ENCODE measurements at regions of chr6 and their contacts with region 1.

Region 1: GRCh38 chr6:32413427-32414047 is 6.6 kb upstream of the BTNL2 start:
- DNase-seq: peak; percentile 91
- ATAC-seq: peak; percentile 86
- H3K4me3 ChIP-seq: no peak overlapping the region
- H3K4me3 Mint-ChIP-seq: peak overlapping the region; percentile 27
- H3K27ac ChIP-seq: no peak overlapping the region
- H3K27ac Mint-ChIP-seq: peak overlapping the region; percentile 8
- H3K4me1 ChIP-seq: peaks cover 7 to 11% of the 10 kb centered on the region in 2 donors
- H3K4me1 Mint-ChIP-seq: peaks cover 13% of the 10 kb centered on the region
- H3K27me3 ChIP-seq: peaks cover 0 to 19% (median 10%) of the 10 kb centered on the region in 4 experiments
- H3K27me3 Mint-ChIP-seq: peaks cover 20% of the 10 kb centered on the region
- CTCF ChIP-seq: peak; percentile 94

Region 2: DNA sequence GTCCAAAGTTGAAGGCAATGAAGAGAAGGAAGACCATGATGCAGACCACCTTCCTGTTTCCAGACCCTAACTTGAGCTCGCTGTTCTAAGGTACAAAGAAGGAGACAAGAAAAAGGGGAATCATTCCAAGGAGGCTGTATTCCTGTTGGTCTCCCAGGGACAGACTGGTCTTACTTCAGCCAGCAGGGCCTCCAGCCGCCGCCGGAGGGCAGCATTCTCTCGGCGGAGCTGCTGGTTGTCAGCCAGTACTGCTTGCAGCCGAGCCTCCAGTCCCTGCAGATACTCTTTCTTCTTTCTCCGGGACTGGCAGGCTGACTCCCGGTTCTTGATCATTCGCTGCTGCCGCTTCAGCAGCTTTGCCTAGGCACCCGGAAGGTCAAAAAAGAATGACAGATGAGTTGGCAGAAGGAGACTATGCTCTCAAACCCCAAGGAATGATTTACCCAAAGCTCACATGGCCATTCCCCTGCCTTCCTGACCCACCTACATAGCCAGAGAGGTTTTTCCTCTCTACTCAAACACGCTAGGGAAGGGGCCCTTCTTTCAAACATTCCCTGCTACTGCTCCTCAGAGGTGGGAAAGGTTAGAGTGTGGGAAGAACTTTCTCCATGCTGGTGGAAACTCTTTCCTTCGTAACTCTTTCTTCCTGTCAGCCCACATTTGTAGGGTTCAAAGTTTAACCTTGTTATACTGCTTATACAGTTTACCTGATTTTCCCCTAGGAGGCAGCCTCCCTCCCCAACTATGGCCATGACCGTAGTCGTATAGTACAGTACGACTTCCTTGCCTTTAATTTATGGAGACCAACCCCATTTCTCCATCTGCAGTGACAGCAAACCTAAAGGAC is 294.5 kb before region 1 on chr6:
- CTCF ChIA-PET with region 1: interaction called, 3 read pairs
- POLR2A ChIA-PET with region 1: no interaction called
- intact Hi-C with region 1: loop called (anchors 2 kb)
- DNase-seq: peak; percentile 77
- ATAC-seq: peak; percentile 85
- H3K4me3 ChIP-seq: no peak overlapping the region
- H3K4me3 Mint-ChIP-seq: no peak overlapping the region
- H3K27ac ChIP-seq: no peak overlapping the region
- H3K27ac Mint-ChIP-seq: no peak overlapping the region
- H3K4me1 ChIP-seq: peaks cover 0 to 3% of the 10 kb centered on the region in 2 donors
- H3K4me1 Mint-ChIP-seq: peaks cover 7% of the 10 kb centered on the region
- H3K27me3 ChIP-seq: no peaks in the 10 kb centered on the region
- H3K27me3 Mint-ChIP-seq: no peaks in the 10 kb centered on the region
- CTCF ChIP-seq: peak; percentile 95

Region 3: DNA sequence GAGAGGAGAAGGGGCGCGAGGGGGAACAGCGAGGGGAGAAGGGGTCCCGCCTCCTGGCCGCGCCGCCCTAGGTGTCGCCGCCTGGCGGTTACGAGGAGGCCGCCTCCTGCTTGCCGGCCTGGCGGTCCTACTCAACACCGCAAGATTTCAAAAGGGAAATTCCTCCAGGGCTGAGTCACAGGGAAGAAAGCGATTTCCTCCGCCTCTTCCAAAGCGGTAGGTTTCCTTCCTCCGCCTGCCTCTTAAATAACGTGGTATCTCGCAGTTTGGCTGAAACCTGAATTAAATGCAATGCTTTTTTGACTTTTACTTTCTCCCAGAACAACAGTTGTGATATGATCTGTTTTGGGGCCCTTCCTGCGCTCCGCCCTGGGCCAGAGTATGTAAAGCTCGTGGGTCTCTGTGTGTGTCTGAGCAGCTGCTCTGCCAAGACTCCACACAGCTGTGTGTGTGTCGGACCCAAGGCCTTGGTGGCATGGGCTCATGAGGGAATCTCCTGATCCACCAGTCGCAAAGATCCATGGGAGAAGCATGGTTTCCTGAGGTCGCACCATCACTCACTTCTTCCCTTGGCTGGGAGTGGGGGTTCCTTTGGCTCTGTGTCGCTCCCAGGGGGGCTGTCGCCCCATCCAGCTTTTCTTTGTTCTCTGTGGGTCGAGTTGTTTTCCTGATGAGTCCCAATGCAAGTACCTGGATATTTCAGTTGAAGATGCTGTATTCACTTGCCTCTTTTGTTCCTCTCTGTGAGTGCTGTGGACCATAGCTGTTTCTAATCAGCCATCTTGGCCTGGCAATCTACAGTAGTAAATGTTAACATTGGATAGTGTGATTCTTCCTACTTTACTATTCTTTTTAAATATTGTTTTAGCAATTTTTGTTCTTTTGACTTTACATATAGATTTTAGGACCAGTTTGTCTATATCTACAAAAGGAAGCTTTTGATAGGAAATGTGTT is 158.1 kb before region 1 on chr6:
- CTCF ChIA-PET with region 1: interaction called, 172 read pairs
- POLR2A ChIA-PET with region 1: no interaction called
- intact Hi-C with region 1: no loop called
- DNase-seq: peak; percentile 79
- ATAC-seq: peak; percentile 75
- H3K4me3 ChIP-seq: peak overlapping the region in 4 of 5 experiments; percentile 32 to 81 (median 60)
- H3K4me3 Mint-ChIP-seq: peak overlapping the region; percentile 83
- H3K27ac ChIP-seq: peak overlapping the region; percentile 58 to 89
- H3K27ac Mint-ChIP-seq: peak overlapping the region; percentile 90
- H3K4me1 ChIP-seq: peaks cover 25 to 34% of the 10 kb centered on the region in 2 donors
- H3K4me1 Mint-ChIP-seq: peaks cover 72% of the 10 kb centered on the region
- H3K27me3 ChIP-seq: no peaks in the 10 kb centered on the region
- H3K27me3 Mint-ChIP-seq: no peaks in the 10 kb centered on the region
- CTCF ChIP-seq: peak; percentile 73

Region 4: DNA sequence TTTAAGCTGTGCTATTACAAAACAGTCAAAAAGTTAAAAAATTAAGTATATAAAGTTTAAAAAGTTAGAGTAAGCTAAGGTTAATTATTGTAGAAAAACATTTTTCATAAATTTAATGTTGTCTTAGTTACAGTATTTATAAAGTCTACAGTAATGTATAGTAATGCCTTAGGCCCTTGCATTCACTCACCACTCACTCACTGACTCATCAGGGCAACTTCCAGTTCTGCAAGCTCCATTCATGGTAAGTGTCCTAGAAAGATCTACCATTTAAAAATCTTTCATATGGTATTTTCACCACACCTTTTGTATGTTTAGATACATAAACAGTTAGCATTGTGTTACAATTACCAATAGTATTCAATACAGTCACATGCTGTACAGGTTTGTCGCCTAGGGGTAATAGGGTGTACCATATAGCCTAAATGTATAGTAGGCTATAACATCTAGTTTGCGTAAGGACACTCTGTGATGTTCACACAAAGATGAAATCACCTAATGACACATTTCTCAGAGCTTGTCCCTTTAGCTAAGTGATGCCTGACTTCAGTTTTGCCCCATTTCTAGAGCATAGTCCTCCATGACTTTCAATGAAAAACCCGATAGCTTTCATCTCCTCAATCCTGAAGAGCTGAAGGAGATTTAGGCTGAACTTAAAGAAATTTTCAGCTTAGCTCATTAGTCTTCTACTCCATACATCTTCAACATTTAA is 11.2 kb after region 1 on chr6:
- CTCF ChIA-PET with region 1: interaction called, 46 read pairs
- POLR2A ChIA-PET with region 1: no interaction called
- intact Hi-C with region 1: no loop called
- DNase-seq: no peak
- ATAC-seq: no peak
- H3K4me3 ChIP-seq: no peak overlapping the region
- H3K4me3 Mint-ChIP-seq: no peak overlapping the region
- H3K27ac ChIP-seq: no peak overlapping the region
- H3K27ac Mint-ChIP-seq: no peak overlapping the region
- H3K4me1 ChIP-seq: no peaks in the 10 kb centered on the region
- H3K4me1 Mint-ChIP-seq: no peaks in the 10 kb centered on the region
- H3K27me3 ChIP-seq: peaks cover 0 to 2% (median under 1%) of the 10 kb centered on the region in 4 experiments
- H3K27me3 Mint-ChIP-seq: peaks cover 13% of the 10 kb centered on the region
- CTCF ChIP-seq: no peak

Region 5: GRCh38 chr6:32692019-32692418 is 278.5 kb after region 1 on chr6:
- CTCF ChIA-PET with region 1: interaction called, 11 read pairs
- POLR2A ChIA-PET with region 1: no interaction called
- intact Hi-C with region 1: no loop called
- DNase-seq: peak; percentile 85
- ATAC-seq: peak; percentile 60
- H3K4me3 ChIP-seq: no peak overlapping the region
- H3K4me3 Mint-ChIP-seq: peak overlapping the region; percentile 53
- H3K27ac ChIP-seq: peak overlapping the region; percentile 68 to 95
- H3K27ac Mint-ChIP-seq: peak overlapping the region; percentile 85
- H3K4me1 ChIP-seq: peaks cover 27 to 28% of the 10 kb centered on the region in 2 donors
- H3K4me1 Mint-ChIP-seq: peaks cover 33% of the 10 kb centered on the region
- H3K27me3 ChIP-seq: no peaks in the 10 kb centered on the region
- H3K27me3 Mint-ChIP-seq: no peaks in the 10 kb centered on the region
- CTCF ChIP-seq: peak; percentile 42

Region 6: DNA sequence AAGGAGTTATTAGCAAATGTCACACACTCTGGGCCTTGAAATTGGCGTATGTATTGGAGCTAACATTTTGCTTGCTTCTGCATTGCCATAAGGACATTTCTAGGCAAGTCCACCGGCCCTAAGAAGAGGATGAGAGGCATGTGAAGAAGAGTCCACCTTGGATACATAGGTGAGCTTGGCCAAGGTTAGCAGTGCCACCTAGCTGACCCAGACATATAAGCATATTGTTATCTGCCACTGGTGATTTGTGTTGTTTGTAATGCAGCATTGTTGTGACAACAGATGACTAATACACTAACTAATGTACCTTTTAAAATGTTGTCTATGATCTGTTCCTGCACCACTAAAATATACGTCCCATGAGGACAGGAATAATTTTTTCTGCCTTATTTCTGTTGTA is 302.9 kb after region 1 on chr6:
- CTCF ChIA-PET with region 1: interaction called, 17 read pairs
- POLR2A ChIA-PET with region 1: no interaction called
- intact Hi-C with region 1: no loop called
- DNase-seq: no peak
- ATAC-seq: no peak
- H3K4me3 ChIP-seq: no peak overlapping the region
- H3K4me3 Mint-ChIP-seq: no peak overlapping the region
- H3K27ac ChIP-seq: no peak overlapping the region
- H3K27ac Mint-ChIP-seq: no peak overlapping the region
- H3K4me1 ChIP-seq: no peaks in the 10 kb centered on the region
- H3K4me1 Mint-ChIP-seq: no peaks in the 10 kb centered on the region
- H3K27me3 ChIP-seq: no peaks in the 10 kb centered on the region
- H3K27me3 Mint-ChIP-seq: peaks cover 7% of the 10 kb centered on the region
- CTCF ChIP-seq: no peak

Region 7: GRCh38 chr6:32796848-32797776 is 383.6 kb after region 1 on chr6:
- CTCF ChIA-PET with region 1: interaction called, 90 read pairs
- POLR2A ChIA-PET with region 1: no interaction called
- intact Hi-C with region 1: loop called (anchors 1 kb)
- DNase-seq: peak; percentile 92
- ATAC-seq: peak; percentile 83
- H3K4me3 ChIP-seq: peak overlapping the region in 4 of 5 experiments; percentile 26 to 53 (median 42)
- H3K4me3 Mint-ChIP-seq: peak overlapping the region; percentile 90
- H3K27ac ChIP-seq: peak overlapping the region; percentile 60 to 64
- H3K27ac Mint-ChIP-seq: peak overlapping the region; percentile 93
- H3K4me1 ChIP-seq: peaks cover 26 to 32% of the 10 kb centered on the region in 2 donors
- H3K4me1 Mint-ChIP-seq: peaks cover 40% of the 10 kb centered on the region
- H3K27me3 ChIP-seq: no peaks in the 10 kb centered on the region
- H3K27me3 Mint-ChIP-seq: no peaks in the 10 kb centered on the region
- CTCF ChIP-seq: peak; percentile 91